A673 (cell line): ENCODE measurements at regions of chr21 and their contacts with region 1.

Region 1: GRCh38 chr21:46594276-46594675 is 10.6 kb downstream of the S100B start:
- DNase-seq: no peak
- H3K4me3 ChIP-seq: no peak overlapping the region
- H3K27ac ChIP-seq: no peak overlapping the region
- H3K4me1 ChIP-seq: no peaks in the 10 kb centered on the region
- H3K27me3 ChIP-seq: no peaks in the 10 kb centered on the region
- CTCF ChIP-seq: no peak

Region 2: GRCh38 chr21:46356494-46357334 is 237.6 kb before region 1 on chr21:
- CTCF ChIA-PET with region 1: no interaction called
- POLR2A ChIA-PET with region 1: interaction called, 14 read pairs
- intact Hi-C with region 1: no loop called
- DNase-seq: no peak
- H3K4me3 ChIP-seq: no peak overlapping the region
- H3K27ac ChIP-seq: no peak overlapping the region
- H3K4me1 ChIP-seq: no peaks in the 10 kb centered on the region
- H3K27me3 ChIP-seq: no peaks in the 10 kb centered on the region
- CTCF ChIP-seq: no peak